Heart right ventricle (tissue), 16 donors: ENCODE measurements at regions of chr12 and their contacts with region 1.

Region 1: DNA sequence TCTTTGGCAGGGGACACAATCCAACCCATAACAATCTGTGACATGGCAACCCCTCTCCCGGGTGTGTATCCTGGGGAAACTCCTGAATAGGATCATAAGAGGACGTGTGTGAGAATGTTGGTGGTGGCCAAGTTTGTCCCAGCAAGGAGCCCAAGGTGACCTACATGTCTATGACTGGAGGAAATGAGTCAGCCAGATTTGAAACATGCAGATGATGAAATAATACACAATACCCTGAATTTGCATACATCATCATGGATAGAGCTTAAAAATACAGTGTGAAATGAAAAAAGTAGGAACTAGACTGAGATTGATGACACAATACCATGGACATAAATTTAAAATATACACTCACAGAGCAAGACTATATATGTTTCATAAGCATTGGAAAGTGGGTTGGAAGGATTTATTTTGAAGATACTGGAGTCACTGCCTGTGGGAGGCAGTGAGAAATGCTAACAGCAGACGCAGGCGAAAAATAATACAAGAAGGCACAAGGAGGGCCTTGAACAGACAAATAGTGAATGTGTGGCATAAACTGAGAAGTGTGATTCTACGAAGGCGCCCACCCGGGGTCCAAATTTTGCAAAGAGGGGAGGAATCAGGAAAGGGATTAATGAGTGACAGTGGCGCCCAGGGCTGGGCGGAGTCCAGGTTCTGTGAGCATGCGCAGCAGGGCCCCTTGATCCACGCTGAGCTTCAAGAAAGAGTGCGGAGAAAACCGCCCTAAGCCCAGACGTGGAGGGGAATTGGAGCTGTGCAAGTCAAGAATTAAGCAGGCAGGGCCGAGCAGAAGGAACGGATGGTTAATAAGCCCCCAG is 7.0 kb upstream of the MAP1LC3B2 start:
- DNase-seq: no peak
- ATAC-seq: peak in 3 of 8 donors; percentile 52 to 88 (median 80)
- H3K4me3 ChIP-seq: no peak overlapping the region
- H3K27ac ChIP-seq: peak overlapping the region in 1 of 10 donors; percentile 65
- H3K4me1 ChIP-seq: peaks cover 0 to 31% (median 17%) of the 10 kb centered on the region in 9 donors
- H3K27me3 ChIP-seq: peaks cover 0 to 6% (median 0%) of the 10 kb centered on the region in 7 donors
- CTCF ChIP-seq: no peak

Region 2: GRCh38 chr12:116591855-116592637 is 39.9 kb after region 1 on chr12:
- intact Hi-C with region 1: loop called in 1 of 10 experiments (anchors 5 kb)
- DNase-seq: peak in 1 of 2 donors; percentile 30
- ATAC-seq: peak in 6 of 8 donors; percentile 8 to 66 (median 44)
- H3K4me3 ChIP-seq: no peak overlapping the region
- H3K27ac ChIP-seq: peak overlapping the region in 1 of 10 donors; percentile 56
- H3K4me1 ChIP-seq: peaks cover 0 to 36% (median 18%) of the 10 kb centered on the region in 9 donors
- H3K27me3 ChIP-seq: no peaks in the 10 kb centered on the region
- CTCF ChIP-seq: no peak

Region 3: GRCh38 chr12:116673681-116674111 is 121.5 kb after region 1 on chr12:
- intact Hi-C with region 1: no loop called
- DNase-seq: no peak
- ATAC-seq: no peak
- H3K4me3 ChIP-seq: no peak overlapping the region
- H3K27ac ChIP-seq: peak overlapping the region in 2 of 10 donors; percentile 49 to 83
- H3K4me1 ChIP-seq: peaks cover 6 to 46% (median 22%) of the 10 kb centered on the region in 9 donors
- H3K27me3 ChIP-seq: no peaks in the 10 kb centered on the region
- CTCF ChIP-seq: no peak